GM12878 (cell line): ENCODE measurements at regions of chr1 and their contacts with region 1.

Region 1: DNA sequence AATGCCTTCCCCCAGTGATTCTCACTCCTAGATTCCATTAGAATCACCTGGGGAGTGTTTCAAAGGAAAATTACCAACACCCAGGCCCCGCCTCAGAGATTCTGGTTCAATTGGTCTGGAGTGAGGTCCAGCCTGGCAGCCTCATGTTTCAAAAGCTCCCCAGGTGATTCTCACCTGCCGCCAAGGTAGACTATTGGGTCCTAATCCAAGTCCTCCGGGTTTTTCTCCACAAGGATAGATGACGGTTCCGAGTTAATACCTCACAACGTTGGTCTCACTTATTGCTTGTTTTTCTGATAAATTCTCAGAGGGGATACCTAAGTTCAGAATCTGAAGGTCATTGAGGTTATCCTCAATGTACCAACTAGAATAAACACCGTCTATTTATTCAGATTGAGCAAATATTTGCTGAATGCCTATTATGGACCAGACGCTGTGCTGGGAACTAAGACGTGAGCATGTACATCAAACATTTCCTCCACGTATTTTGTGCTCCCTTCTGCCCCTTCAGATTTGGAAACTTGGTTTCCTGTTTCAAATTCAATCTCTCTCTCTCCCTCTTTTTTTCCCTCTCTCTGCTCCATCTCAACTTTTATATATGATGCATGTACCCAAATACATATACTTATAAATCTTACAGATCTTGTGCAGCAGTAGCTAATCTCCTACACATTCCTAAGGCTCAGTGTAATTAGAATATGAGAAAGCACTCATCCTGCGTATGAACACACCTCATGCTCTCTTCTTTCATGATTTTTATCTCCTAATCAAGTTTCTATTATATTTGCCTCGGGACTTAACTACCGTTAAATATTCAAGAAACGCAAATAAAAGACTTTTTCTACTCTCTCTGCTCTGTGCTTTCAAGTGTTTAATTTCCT is 97.3 kb downstream of the SEC16B start:
- DNase-seq: no peak
- ATAC-seq: no peak
- H3K4me3 ChIP-seq: no peak overlapping the region
- H3K27ac ChIP-seq: no peak overlapping the region
- H3K4me1 ChIP-seq: no peaks in the 10 kb centered on the region
- H3K27me3 ChIP-seq: no peaks in the 10 kb centered on the region
- CTCF ChIP-seq: no peak
- EP300 ChIP-seq: no peak
- POLR2A ChIP-seq: no peak
- RAD21 ChIP-seq: no peak

Region 2: DNA sequence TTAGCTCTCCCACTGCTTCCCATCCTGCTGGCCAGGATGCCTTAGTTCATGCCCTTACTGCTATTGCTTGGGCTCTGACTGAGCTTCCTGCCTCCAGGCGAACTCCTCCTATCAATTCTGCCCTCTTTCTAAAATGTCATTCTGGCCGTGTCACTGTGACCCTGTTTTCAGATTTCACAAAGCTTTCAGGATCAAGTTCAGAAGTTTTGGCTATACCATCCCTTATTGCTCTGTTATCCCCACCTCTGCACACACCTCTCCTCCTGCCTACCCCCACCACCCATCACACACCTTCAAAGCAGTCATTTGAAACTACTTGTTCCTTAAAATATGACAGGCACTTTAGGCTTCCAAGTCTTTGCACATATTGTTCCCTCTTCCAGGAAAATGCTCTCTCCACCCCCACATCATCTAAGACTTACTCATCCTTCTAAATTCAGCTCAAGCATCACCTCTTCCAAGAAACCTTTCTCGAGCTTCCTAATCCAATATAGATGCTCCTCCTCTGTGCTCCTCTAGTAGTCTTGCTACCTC is 423.7 kb before region 1 on chr1:
- CTCF ChIA-PET with region 1: no interaction called
- POLR2A ChIA-PET with region 1: no interaction called
- RAD21 ChIA-PET with region 1: no interaction called
- SMC1A ChIA-PET with region 1: no interaction called
- in situ Hi-C with region 1: no loop called
- intact Hi-C with region 1: no loop called
- DNase-seq: no peak
- ATAC-seq: no peak
- H3K4me3 ChIP-seq: no peak overlapping the region
- H3K27ac ChIP-seq: no peak overlapping the region
- H3K4me1 ChIP-seq: no peaks in the 10 kb centered on the region
- H3K27me3 ChIP-seq: no peaks in the 10 kb centered on the region
- CTCF ChIP-seq: no peak
- EP300 ChIP-seq: no peak
- POLR2A ChIP-seq: no peak
- RAD21 ChIP-seq: no peak

Region 3: DNA sequence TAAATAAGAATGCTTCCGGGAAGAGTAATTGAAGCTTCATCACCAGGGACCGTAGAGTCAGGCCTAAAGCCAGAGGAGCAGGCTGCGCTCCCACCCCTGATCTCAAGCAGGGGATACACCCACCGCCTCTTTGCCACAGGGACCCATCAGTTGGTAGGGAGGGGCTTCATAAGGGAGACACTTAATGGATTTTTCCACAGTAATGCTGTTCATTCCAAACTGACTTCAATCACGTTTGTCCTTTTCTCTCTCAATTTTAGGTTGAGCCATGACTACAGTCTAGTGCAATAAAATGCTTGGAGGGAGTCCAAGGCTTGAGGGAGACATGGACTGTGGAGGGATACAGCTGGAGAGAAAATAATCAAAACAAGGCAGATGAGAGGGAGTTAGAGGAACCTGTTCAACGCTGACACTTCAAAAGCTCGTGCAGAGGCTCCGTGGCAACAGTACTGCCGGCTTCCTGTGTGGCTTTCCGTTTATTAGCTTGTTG is 14.2 kb before region 1 on chr1:
- CTCF ChIA-PET with region 1: interaction called, 6 read pairs
- POLR2A ChIA-PET with region 1: no interaction called
- RAD21 ChIA-PET with region 1: interaction called, 3 read pairs
- SMC1A ChIA-PET with region 1: interaction called, 15 read pairs
- in situ Hi-C with region 1: no loop called
- intact Hi-C with region 1: no loop called
- DNase-seq: no peak
- ATAC-seq: peak; percentile 55
- H3K4me3 ChIP-seq: no peak overlapping the region
- H3K27ac ChIP-seq: no peak overlapping the region
- H3K4me1 ChIP-seq: no peaks in the 10 kb centered on the region
- H3K27me3 ChIP-seq: no peaks in the 10 kb centered on the region
- CTCF ChIP-seq: no peak
- EP300 ChIP-seq: no peak
- POLR2A ChIP-seq: no peak
- RAD21 ChIP-seq: no peak

Region 4: GRCh38 chr1:177922209-177922608 is 49.7 kb after region 1 on chr1:
- CTCF ChIA-PET with region 1: no interaction called
- POLR2A ChIA-PET with region 1: no interaction called
- RAD21 ChIA-PET with region 1: no interaction called
- SMC1A ChIA-PET with region 1: no interaction called
- in situ Hi-C with region 1: no loop called
- intact Hi-C with region 1: no loop called
- DNase-seq: no peak
- ATAC-seq: peak; percentile 70
- H3K4me3 ChIP-seq: no peak overlapping the region
- H3K27ac ChIP-seq: no peak overlapping the region
- H3K4me1 ChIP-seq: no peaks in the 10 kb centered on the region
- H3K27me3 ChIP-seq: no peaks in the 10 kb centered on the region; a peak in 3 of 4 replicates
- CTCF ChIP-seq: no peak
- EP300 ChIP-seq: no peak
- POLR2A ChIP-seq: no peak
- RAD21 ChIP-seq: no peak